Heart right ventricle (tissue), 16 donors: ENCODE measurements at regions of chr3 and their contacts with region 1.

Region 1: DNA sequence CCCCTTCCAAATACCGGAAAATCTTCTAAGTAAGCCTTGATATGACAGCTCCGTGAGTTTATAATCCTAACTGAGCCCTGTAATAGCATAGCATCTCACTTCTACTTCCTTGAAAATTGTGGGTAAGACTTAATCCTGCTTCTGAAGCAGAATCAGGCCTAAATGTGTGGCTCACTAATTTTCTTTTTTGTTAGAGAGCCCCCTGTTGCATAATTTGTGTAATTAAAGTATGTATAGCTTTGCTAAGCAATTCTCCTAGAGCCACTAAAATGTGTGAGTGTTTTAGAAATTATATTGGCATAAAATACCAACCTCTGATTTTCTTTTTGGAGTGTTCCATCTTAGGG is 304.4 kb downstream of the FGF12 start:
- DNase-seq: no peak
- ATAC-seq: no peak
- H3K4me3 ChIP-seq: no peak overlapping the region
- H3K27ac ChIP-seq: no peak overlapping the region
- H3K4me1 ChIP-seq: peaks cover 0 to 4% (median 0%) of the 10 kb centered on the region in 9 donors
- H3K27me3 ChIP-seq: no peaks in the 10 kb centered on the region
- CTCF ChIP-seq: peak in 8 of 9 donors; percentile 11 to 63 (median 32)

Region 2: GRCh38 chr3:192188218-192188835 is 234.6 kb before region 1 on chr3:
- intact Hi-C with region 1: loop called in 3 of 10 experiments (anchors 5 to 10 kb)
- DNase-seq: peak; percentile 19 to 29
- ATAC-seq: peak in 2 of 8 donors; percentile 63 to 69
- H3K4me3 ChIP-seq: no peak overlapping the region
- H3K27ac ChIP-seq: no peak overlapping the region
- H3K4me1 ChIP-seq: peaks cover 0 to 23% (median 0%) of the 10 kb centered on the region in 9 donors
- H3K27me3 ChIP-seq: no peaks in the 10 kb centered on the region
- CTCF ChIP-seq: peak; percentile 32 to 71 (median 63)

Region 3: GRCh38 chr3:192433704-192434103 is 10.7 kb after region 1 on chr3:
- intact Hi-C with region 1: no loop called
- DNase-seq: no peak
- ATAC-seq: no peak
- H3K4me3 ChIP-seq: no peak overlapping the region
- H3K27ac ChIP-seq: no peak overlapping the region
- H3K4me1 ChIP-seq: peaks cover 0 to 12% (median 0%) of the 10 kb centered on the region in 9 donors
- H3K27me3 ChIP-seq: no peaks in the 10 kb centered on the region
- CTCF ChIP-seq: no peak

Region 4: DNA sequence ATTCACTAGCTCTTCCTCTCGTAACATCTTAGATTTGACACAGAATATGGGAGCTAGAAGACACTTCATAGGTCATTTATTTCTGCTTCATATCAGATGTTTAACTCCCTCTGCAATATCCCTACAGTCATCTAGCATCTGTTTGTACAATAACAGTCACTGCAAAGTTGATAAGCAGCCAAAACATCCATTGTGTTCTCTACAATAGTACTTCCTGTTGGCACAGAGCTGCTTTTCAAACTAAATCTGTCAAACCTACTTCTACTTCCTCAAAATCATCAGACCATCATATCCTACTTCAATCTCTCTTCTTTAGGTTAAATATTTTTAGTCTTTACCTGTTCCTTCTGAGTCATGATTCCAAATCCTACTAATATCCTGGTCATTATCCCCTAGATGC is 71.2 kb after region 1 on chr3:
- intact Hi-C with region 1: no loop called
- DNase-seq: peak in 1 of 2 donors; percentile 27
- ATAC-seq: peak; percentile 57 to 91 (median 76)
- H3K4me3 ChIP-seq: no peak overlapping the region
- H3K27ac ChIP-seq: peak overlapping the region in 9 of 10 donors; percentile 3 to 68 (median 41)
- H3K4me1 ChIP-seq: peaks cover 0 to 38% (median 13%) of the 10 kb centered on the region in 9 donors
- H3K27me3 ChIP-seq: no peaks in the 10 kb centered on the region
- CTCF ChIP-seq: no peak